Heart right ventricle (tissue), 16 donors: ENCODE measurements at regions of chr3 and their contacts with region 1.

Region 1: DNA sequence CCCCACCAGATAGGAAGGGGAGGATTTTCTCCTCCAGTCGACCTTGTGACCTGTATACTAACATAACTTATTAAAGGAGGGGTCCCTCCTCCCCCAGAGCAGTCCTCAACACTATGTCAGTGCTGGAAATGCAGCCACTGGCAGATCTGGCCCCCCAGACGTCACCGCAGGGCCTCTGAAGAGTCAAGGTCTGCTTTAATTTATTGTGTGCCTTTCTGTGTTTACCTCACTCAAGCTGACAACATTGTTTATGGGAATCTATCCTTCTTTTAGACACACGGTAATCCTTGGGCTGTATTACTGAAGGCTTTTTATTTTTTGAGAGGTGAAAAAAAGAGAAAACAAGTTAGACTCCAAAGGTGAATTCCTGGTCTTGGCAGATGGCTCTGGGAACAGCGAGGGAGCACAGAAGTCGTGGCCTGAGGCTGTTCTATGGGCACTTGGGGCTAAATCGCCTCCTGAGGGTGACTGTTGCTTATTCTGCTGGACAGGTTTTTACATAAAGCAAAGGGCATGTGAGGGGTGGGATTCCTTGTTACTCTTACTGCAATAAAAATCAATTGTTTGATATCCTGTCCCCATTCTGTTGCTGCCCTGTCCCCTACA is 13.5 kb upstream of the NR2C2 start:
- DNase-seq: no peak
- ATAC-seq: no peak
- H3K4me3 ChIP-seq: no peak overlapping the region
- H3K27ac ChIP-seq: no peak overlapping the region
- H3K4me1 ChIP-seq: no peaks in the 10 kb centered on the region
- H3K27me3 ChIP-seq: no peaks in the 10 kb centered on the region
- CTCF ChIP-seq: no peak

Region 2: GRCh38 chr3:15042936-15043335 is 109.0 kb after region 1 on chr3:
- intact Hi-C with region 1: loop called in 1 of 10 experiments (anchors 10 kb)
- DNase-seq: no peak
- ATAC-seq: no peak
- H3K4me3 ChIP-seq: no peak overlapping the region
- H3K27ac ChIP-seq: no peak overlapping the region
- H3K4me1 ChIP-seq: peaks cover 0 to 46% (median 24%) of the 10 kb centered on the region in 9 donors
- H3K27me3 ChIP-seq: no peaks in the 10 kb centered on the region
- CTCF ChIP-seq: no peak